Body of pancreas (tissue), 4 donors: ENCODE measurements at regions of chr19 and their contacts with region 1.

Region 1: DNA sequence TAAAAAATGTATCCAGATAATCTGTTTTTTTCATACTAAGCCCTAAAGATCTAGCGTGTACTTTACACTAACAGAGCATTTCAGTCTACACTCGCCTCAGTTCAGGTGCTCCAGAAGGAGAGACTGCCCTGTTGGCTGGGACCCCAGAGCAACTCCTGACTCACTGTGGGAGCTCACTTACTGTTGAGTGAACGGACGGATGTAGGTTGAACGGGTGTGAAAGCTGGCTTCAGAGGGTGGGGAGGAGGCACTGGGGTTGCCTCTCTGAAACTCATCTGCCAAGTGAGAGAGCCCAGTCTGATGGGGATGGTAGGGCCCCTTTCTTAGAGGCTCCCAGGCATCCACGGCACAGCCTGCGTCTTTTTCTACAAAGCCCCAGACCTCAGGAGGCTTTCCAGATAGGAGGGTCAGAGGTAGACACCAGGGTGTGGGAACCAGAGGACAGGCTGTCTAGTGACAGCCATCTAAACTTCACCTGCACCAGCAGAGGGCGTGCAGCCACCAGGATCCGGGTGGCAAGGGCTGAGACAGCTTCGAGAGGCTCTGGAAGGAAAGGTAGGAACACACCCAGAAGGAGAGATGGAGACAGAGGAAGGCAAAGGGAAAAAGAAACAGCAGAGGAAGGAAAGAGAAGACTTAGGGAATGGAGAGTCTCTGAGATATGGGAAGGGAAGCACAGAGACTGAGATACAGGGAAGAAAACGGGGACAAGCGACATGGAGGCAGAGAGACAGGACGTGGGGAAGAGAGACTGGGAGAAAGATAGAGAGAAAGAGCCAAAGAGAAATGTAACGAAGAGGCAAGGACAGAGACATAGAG is 3.7 kb downstream of the KASH5 start:
- DNase-seq: peak; percentile 80 to 86 (median 84)
- ATAC-seq: peak; percentile 68
- H3K4me3 ChIP-seq: no peak overlapping the region
- H3K27ac ChIP-seq: peak overlapping the region; percentile 10 to 93 (median 89)
- H3K4me1 ChIP-seq: peaks cover 27% of the 10 kb centered on the region
- H3K27me3 ChIP-seq: no peaks in the 10 kb centered on the region
- CTCF ChIP-seq: peak; percentile 65 to 95 (median 89)
- POLR2A ChIP-seq: no peak

Region 2: DNA sequence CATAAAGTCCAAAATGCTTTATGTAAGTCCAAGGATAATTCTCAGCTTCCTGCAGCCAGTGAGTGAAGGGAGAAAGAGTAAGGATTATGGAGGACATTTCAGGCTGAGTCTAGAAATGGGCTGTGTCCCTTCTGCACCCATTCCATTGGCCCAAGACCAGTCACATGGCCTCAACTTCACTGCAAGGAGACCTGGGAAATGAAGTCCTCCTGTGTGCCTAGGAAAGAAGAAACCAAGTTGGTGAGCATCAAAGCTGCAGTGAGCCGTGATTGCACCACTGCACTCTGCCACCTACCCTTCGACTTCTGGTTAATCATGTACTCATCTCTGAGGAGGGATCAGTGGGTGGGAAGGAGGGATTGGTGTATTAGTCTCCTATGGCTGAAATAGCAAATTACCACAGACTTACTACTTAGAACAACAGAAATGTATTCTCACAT is 60.2 kb before region 1 on chr19:
- intact Hi-C with region 1: no loop called
- DNase-seq: peak; percentile 26 to 51 (median 40)
- ATAC-seq: peak; percentile 82
- H3K4me3 ChIP-seq: no peak overlapping the region
- H3K27ac ChIP-seq: no peak overlapping the region
- H3K4me1 ChIP-seq: no peaks in the 10 kb centered on the region
- H3K27me3 ChIP-seq: no peaks in the 10 kb centered on the region
- CTCF ChIP-seq: no peak
- POLR2A ChIP-seq: no peak

Region 3: GRCh38 chr19:49443366-49444099 is 51.7 kb after region 1 on chr19:
- intact Hi-C with region 1: loop called (anchors 5 kb)
- DNase-seq: peak; percentile 95 to 97 (median 96)
- ATAC-seq: peak; percentile 90
- H3K4me3 ChIP-seq: peak overlapping the region; percentile 20 to 25
- H3K27ac ChIP-seq: peak overlapping the region in 3 of 4 donors; percentile 28 to 73 (median 59)
- H3K4me1 ChIP-seq: peaks cover 15% of the 10 kb centered on the region
- H3K27me3 ChIP-seq: peaks cover 0 to 30% of the 10 kb centered on the region in 2 donors
- CTCF ChIP-seq: peak; percentile 63 to 98 (median 87)
- POLR2A ChIP-seq: peak in 2 of 3 donors; percentile 0 to 17